Body of pancreas (tissue), 4 donors: ENCODE measurements at regions of chr1 and their contacts with region 1.

Region 1: DNA sequence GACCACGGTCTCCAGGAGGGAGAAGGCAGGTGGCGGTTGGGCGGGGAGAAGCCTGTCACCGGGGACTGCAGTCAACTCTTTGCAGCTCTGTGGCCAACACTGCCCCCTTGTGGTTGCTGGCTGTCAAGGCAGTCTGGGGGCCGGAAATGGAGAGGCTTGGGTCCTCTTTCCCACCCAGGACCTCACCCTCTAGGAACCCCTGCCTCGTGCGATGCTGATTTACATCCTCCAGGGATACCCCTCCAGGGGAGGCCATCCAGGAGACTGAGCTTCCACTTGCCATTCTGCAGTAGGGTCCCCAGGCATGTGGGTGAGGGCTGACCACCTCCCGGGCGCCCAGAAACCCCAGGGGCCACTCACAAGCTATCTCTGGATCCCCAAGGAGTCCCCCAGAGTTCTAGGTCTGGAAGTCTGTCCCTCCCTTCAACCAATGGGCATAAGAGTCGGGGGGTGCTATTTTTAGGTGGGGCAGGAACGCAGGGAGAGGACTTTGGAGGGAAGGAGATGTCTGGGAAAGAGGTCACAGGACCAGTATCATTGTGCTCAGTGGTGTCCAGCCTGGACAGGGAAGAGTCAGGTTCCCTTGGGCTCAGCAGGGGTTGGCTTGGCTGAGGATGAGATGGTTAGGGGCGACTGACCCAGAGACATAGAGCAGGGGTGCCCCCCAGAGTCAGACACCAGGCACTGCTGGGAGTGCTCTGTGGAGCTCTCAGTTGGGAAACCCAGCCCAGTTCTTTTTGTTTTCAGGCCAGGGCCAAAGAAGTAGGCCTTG is 7.1 kb upstream of the GPR61 start:
- DNase-seq: peak; percentile 82 to 85 (median 84)
- ATAC-seq: peak; percentile 90
- H3K4me3 ChIP-seq: no peak overlapping the region
- H3K27ac ChIP-seq: no peak overlapping the region
- H3K4me1 ChIP-seq: peaks cover 11% of the 10 kb centered on the region
- H3K27me3 ChIP-seq: no peaks in the 10 kb centered on the region
- CTCF ChIP-seq: peak; percentile 90 to 97 (median 95)
- POLR2A ChIP-seq: no peak

Region 2: GRCh38 chr1:109485001-109485400 is 47.5 kb before region 1 on chr1:
- intact Hi-C with region 1: loop called (anchors 5 kb)
- DNase-seq: no peak
- ATAC-seq: no peak
- H3K4me3 ChIP-seq: no peak overlapping the region
- H3K27ac ChIP-seq: no peak overlapping the region
- H3K4me1 ChIP-seq: peaks cover 15% of the 10 kb centered on the region
- H3K27me3 ChIP-seq: no peaks in the 10 kb centered on the region
- CTCF ChIP-seq: no peak
- POLR2A ChIP-seq: no peak

Region 3: GRCh38 chr1:109499661-109500536 is 32.7 kb before region 1 on chr1:
- intact Hi-C with region 1: loop called (anchors 5 kb)
- DNase-seq: peak; percentile 54 to 74 (median 55)
- ATAC-seq: no peak
- H3K4me3 ChIP-seq: no peak overlapping the region
- H3K27ac ChIP-seq: no peak overlapping the region
- H3K4me1 ChIP-seq: peaks cover 8% of the 10 kb centered on the region
- H3K27me3 ChIP-seq: no peaks in the 10 kb centered on the region
- CTCF ChIP-seq: peak in 5 of 7 experiments; percentile 15 to 39 (median 25)
- POLR2A ChIP-seq: no peak

Region 4: DNA sequence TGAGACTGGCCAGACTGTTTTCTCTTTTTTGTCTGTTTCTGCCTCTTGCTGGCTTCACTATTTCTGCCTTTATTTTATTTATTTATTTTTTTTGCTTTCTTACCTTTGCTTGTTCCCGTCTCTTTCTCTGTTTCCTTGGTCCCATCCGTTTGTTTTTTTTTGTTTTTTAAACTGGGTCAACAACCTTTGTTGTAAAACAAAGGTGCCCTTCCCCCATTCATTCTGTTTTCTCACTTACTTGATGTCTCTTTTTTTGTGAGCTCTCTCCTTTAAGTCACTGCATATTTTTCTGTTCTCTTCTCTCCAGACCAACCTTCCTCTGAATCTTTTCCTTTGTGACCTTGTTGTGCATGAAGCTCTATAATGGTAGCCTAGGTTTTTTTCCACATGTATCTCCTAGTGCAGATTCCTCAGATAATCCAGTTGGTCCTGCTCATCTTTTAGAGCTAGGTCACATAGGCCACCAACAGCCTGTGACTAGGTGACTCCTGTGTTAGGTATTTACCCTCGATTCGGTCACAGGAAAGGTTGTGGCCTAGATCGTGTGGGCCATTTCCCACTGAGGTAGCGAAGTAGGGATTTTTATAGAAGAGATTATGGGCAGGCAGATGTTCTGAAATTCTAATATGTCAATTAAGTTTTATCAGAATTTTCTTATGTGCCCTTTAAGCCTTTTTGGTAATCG is 31.8 kb after region 1 on chr1:
- intact Hi-C with region 1: no loop called
- DNase-seq: no peak
- ATAC-seq: no peak
- H3K4me3 ChIP-seq: no peak overlapping the region
- H3K27ac ChIP-seq: no peak overlapping the region
- H3K4me1 ChIP-seq: peaks cover 86% of the 10 kb centered on the region
- H3K27me3 ChIP-seq: no peaks in the 10 kb centered on the region
- CTCF ChIP-seq: no peak
- POLR2A ChIP-seq: no peak